ENCODE measurements at regions of chr22 and their contacts with region 1.

Region 1: GRCh38 chr22:20268279-20269012 is at the start of gene RTN4R:
- DNase-seq: peak in 4 of 5 donors; percentile 58 to 81 (median 73)
- H3K4me3 ChIP-seq: peak within 1 kb of the TSS; percentile 38
- H3K27ac ChIP-seq: peak within 1 kb of the TSS in 1 of 2 donors; percentile 51
- H3K4me1 ChIP-seq: peaks cover 5% of the 10 kb centered on the region
- H3K27me3 ChIP-seq: no peaks in the 10 kb centered on the region
- CTCF ChIP-seq: peak; percentile 54 to 90 (median 71)
- EP300 ChIP-seq: no peak
- POLR2A ChIP-seq: no peak
- total RNA-seq, gene RTN4R: 0.48 to 8.2 (median 2.2) TPM

Region 2: GRCh38 chr22:20037419-20037818 is 231.0 kb before region 1 on chr22:
- intact Hi-C with region 1: no loop called
- DNase-seq: no peak
- H3K4me3 ChIP-seq: no peak overlapping the region
- H3K27ac ChIP-seq: no peak overlapping the region
- H3K4me1 ChIP-seq: peaks cover 3% of the 10 kb centered on the region
- H3K27me3 ChIP-seq: no peaks in the 10 kb centered on the region
- CTCF ChIP-seq: no peak
- EP300 ChIP-seq: no peak
- POLR2A ChIP-seq: no peak

Region 3: DNA sequence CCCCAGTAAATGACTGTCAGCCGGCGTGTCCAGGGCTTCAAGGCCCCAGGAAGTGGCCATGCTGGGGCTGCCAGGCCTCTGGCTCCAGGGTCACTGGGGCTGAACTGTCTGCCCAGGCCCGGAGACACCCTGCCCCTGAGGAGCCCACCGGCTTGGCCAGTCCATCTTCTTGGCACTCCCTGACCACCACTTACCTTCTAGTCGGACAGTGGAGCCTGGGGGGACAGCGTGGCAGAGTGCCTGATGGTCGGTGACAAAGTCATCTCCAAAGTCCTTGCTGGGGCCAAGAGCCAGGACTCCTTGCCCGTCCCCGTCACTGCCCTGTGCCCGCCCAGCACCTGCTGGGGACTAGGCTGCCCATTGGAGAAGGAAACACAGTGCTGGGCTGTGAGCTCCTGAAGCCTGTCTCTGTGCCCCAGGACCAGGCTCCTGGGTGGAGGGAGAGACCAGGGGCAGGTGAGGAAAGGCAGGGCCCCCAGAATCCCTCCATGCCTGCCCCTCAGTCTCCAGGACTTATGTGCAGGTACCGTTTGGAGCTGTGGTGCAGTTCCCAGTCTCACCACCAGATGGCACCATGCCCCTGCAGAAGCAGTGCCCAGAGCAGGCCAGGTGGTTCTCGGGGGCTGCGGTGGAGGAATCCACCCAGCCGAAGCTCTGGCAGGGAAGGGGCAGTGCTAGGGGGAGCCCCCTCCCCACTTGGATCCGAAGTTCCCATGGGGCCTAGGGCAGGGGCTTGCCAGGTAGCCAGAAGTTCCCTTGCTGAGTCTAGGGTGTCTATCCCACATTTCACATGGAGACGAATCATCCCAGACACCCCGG is 111.6 kb before region 1 on chr22:
- intact Hi-C with region 1: loop called in 3 of 4 experiments (anchors 2 to 5 kb)
- DNase-seq: peak; percentile 74 to 93 (median 90)
- H3K4me3 ChIP-seq: no peak overlapping the region
- H3K27ac ChIP-seq: no peak overlapping the region
- H3K4me1 ChIP-seq: no peaks in the 10 kb centered on the region
- H3K27me3 ChIP-seq: no peaks in the 10 kb centered on the region
- CTCF ChIP-seq: peak; percentile 99
- EP300 ChIP-seq: no peak
- POLR2A ChIP-seq: no peak

Region 4: DNA sequence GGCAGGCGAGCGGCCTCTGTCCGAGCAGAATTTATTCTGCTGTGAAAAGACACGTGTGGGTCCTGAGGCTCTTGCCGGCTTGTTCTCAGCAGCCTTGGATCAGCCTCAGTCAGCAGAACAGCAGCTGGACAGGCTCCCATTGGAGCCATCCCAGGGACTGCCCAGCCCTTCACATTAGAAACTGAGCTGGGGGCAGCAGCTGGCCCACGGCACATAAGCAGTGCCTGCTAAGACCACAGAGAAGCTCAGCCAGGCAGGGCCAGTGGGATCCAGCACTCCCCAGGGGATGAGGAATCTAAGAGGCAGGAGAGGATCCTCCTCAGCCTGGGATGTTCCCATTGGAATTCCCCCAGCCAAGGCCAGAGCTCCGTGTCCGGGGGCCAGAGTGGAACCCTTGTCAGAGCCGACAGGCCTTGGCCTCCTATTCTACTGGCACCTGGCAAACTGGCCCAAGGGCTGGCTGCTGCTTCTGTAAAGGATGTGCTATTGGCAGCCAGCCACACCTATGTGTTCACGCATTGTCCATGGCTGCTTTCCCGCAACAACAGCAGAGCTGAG is 18.6 kb before region 1 on chr22:
- intact Hi-C with region 1: loop called in 1 of 4 experiments (anchors 1 kb)
- DNase-seq: peak; percentile 63 to 79 (median 72)
- H3K4me3 ChIP-seq: no peak overlapping the region
- H3K27ac ChIP-seq: peak overlapping the region in 1 of 2 donors; percentile 57
- H3K4me1 ChIP-seq: peaks cover 31% of the 10 kb centered on the region
- H3K27me3 ChIP-seq: no peaks in the 10 kb centered on the region
- CTCF ChIP-seq: no peak
- EP300 ChIP-seq: no peak
- POLR2A ChIP-seq: no peak